ENCODE measurements at regions of chr14 and their contacts with region 1.

Region 1: GRCh38 chr14:23588884-23589598 is 10.5 kb upstream of the JPH4 start:
- DNase-seq: peak; percentile 94
- H3K4me3 ChIP-seq: no peak overlapping the region; a peak in 1 of 4 replicates
- H3K27ac ChIP-seq: peak overlapping the region in 1 of 2 experiments; percentile 90; a peak in 2 of 4 replicates
- H3K4me1 ChIP-seq: peaks cover 6 to 7% of the 10 kb centered on the region in 2 experiments; a peak in 3 of 4 replicates
- H3K27me3 ChIP-seq: no peaks in the 10 kb centered on the region
- CTCF ChIP-seq: peak; percentile 84
- EP300 ChIP-seq: peak in 1 of 2 experiments; percentile 83; a peak in 2 of 4 replicates
- RAD21 ChIP-seq: peak; percentile 98

Region 2: DNA sequence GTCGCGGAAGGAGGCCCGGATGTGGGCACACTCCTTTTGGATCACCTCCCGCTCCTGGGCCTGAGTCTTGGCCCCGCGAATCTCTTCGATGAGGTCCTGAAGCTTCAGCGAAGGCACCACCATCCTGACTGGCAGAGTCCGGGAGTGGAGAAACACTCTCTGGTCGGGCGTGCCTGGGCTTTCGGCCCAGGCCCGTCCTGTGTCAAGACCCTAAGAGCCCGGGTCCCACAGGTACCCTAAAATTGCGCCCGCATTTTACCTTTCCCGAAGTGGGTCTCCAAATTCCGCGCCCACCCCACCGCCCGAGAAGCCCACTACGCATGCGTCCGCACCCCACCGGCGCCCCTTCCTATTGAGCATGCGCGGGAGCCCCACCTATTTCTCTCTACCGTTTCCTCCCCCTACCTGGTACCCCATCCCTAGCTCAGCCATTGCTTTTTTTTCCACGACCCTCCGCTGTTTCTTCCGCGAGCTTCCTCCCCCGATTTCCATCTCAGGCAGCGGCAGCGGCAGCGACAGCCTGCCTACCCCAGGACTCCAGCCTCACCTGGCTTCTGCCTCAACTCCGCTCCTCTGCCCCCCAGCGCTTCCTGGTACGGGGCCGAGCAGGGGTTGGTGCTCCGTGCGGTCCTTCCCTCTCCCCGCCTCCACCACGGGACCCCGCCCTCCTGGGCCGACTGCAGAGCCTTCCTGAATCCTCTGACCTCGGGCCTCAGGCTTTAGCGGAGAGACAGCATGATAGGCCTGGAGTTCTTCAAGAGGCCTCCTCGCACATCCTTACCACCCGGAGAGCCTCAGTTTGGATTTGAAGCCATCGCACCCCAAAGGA is 21.6 kb before region 1 on chr14 and contains the start of gene AP1G2:
- CTCF ChIA-PET with region 1: interaction called, 16 read pairs
- POLR2A ChIA-PET with region 1: no interaction called
- DNase-seq: peak; percentile 92
- H3K4me3 ChIP-seq: peak within 1 kb of the TSS; percentile 64 to 86
- H3K27ac ChIP-seq: peak within 1 kb of the TSS; percentile 39 to 82; a peak in 3 of 4 replicates
- H3K4me1 ChIP-seq: peaks cover 0 to 34% of the 10 kb centered on the region in 2 experiments; a peak in 1 of 4 replicates
- H3K27me3 ChIP-seq: no peaks in the 10 kb centered on the region
- CTCF ChIP-seq: 0 out of 2 replicates have a peak, but pooled peaks have one; percentile 4
- EP300 ChIP-seq: no peak
- RAD21 ChIP-seq: no peak
- polyA plus RNA-seq, gene AP1G2: 88.3 and 114 TPM in 2 replicates

Region 3: GRCh38 chr14:23577004-23577681 is 11.9 kb before region 1 on chr14:
- CTCF ChIA-PET with region 1: interaction called, 19 read pairs
- POLR2A ChIA-PET with region 1: interaction called, 8 read pairs
- DNase-seq: peak; percentile 92
- H3K4me3 ChIP-seq: peak overlapping the region; percentile 61 to 66; a peak in 3 of 4 replicates
- H3K27ac ChIP-seq: peak overlapping the region in 1 of 2 experiments; percentile 94; a peak in 2 of 4 replicates
- H3K4me1 ChIP-seq: peaks cover 0 to 22% of the 10 kb centered on the region in 2 experiments; a peak in 1 of 4 replicates
- H3K27me3 ChIP-seq: no peaks in the 10 kb centered on the region
- CTCF ChIP-seq: no peak
- EP300 ChIP-seq: no peak
- RAD21 ChIP-seq: no peak

Region 4: DNA sequence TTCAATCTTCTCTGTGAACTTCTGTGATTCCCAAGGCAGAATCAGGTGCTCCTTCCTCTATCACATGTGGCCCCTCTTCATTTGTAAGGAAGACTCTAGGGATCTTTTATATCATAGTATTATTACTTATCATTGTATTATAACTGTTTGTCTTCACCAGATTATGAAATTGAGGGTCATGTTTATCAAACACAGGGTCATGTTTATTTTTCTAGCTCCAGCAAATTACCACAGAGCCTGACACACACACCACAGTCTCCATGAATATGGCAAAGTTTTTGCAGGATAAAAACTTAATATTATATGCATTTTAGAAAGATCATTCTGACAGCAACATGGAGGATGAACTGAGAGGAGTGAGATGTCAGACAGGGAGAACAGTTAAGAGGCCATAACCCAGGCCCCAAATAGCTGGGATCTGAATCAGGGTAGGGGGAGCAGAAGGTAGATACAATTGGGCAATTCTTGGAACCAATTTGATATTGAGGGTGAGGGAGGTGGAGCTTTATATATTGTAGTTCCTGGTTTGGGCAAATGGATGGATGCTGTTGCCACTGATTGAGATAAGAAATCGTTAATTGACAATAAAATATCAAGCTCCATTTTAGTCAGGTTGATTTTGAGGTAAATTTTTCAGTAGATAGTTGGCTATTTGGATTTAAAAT is 177.8 kb after region 1 on chr14:
- CTCF ChIA-PET with region 1: no interaction called
- POLR2A ChIA-PET with region 1: no interaction called
- DNase-seq: no peak
- H3K4me3 ChIP-seq: no peak overlapping the region
- H3K27ac ChIP-seq: no peak overlapping the region
- H3K4me1 ChIP-seq: no peaks in the 10 kb centered on the region
- H3K27me3 ChIP-seq: no peaks in the 10 kb centered on the region
- CTCF ChIP-seq: no peak
- EP300 ChIP-seq: no peak
- RAD21 ChIP-seq: no peak

Region 5: GRCh38 chr14:23910101-23910875 is 321.2 kb after region 1 on chr14:
- CTCF ChIA-PET with region 1: interaction called, 29 read pairs
- POLR2A ChIA-PET with region 1: no interaction called
- DNase-seq: peak; percentile 73
- H3K4me3 ChIP-seq: no peak overlapping the region
- H3K27ac ChIP-seq: no peak overlapping the region
- H3K4me1 ChIP-seq: peaks cover 0 to 2% of the 10 kb centered on the region in 2 experiments; a peak in 1 of 4 replicates
- H3K27me3 ChIP-seq: no peaks in the 10 kb centered on the region
- CTCF ChIP-seq: peak; percentile 76
- EP300 ChIP-seq: no peak
- RAD21 ChIP-seq: peak; percentile 82

Region 6: GRCh38 chr14:23929822-23930294 is 340.8 kb after region 1 on chr14:
- CTCF ChIA-PET with region 1: interaction called, 45 read pairs
- POLR2A ChIA-PET with region 1: no interaction called
- DNase-seq: peak; percentile 81
- H3K4me3 ChIP-seq: no peak overlapping the region; a peak in 1 of 4 replicates
- H3K27ac ChIP-seq: no peak overlapping the region; a peak in 1 of 4 replicates
- H3K4me1 ChIP-seq: no peaks in the 10 kb centered on the region; a peak in 1 of 4 replicates
- H3K27me3 ChIP-seq: no peaks in the 10 kb centered on the region
- CTCF ChIP-seq: peak; percentile 81
- EP300 ChIP-seq: no peak
- RAD21 ChIP-seq: peak; percentile 73

Region 7: DNA sequence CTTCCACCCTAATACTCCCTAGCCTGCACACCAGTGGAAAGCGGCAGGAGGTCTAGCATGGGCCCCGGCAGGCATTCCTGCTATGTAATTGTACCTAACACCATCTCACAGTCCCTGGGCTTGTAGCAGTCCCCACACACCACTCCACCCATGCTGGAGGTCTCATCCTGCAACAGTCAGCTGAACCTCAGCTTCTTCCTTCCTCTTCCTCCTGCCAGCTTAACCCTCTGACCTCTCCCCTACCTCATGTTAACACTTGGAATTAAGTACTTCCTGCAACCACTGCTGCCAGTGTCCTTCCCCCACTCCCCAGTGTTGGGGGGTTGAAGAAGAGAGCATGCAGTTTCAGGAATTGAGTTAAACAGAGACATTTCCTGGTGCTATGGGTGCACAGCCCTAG is 738.3 kb after region 1 on chr14:
- CTCF ChIA-PET with region 1: no interaction called
- POLR2A ChIA-PET with region 1: no interaction called
- DNase-seq: no peak
- H3K4me3 ChIP-seq: no peak overlapping the region
- H3K27ac ChIP-seq: no peak overlapping the region
- H3K4me1 ChIP-seq: peaks cover 0 to 7% of the 10 kb centered on the region in 2 experiments; a peak in 1 of 4 replicates
- H3K27me3 ChIP-seq: no peaks in the 10 kb centered on the region
- CTCF ChIP-seq: no peak
- EP300 ChIP-seq: no peak
- RAD21 ChIP-seq: no peak

Measured in SK-N-SH (cell line).